A673 (cell line): ENCODE measurements at regions of chr1 and their contacts with region 1.

Region 1: GRCh38 chr1:236654957-236655356 is 31.3 kb upstream of the ACTN2 start:
- DNase-seq: peak; percentile 86
- H3K4me3 ChIP-seq: peak overlapping the region; percentile 10
- H3K27ac ChIP-seq: peak overlapping the region; percentile 95
- H3K4me1 ChIP-seq: peaks cover 31% of the 10 kb centered on the region
- H3K27me3 ChIP-seq: no peaks in the 10 kb centered on the region
- CTCF ChIP-seq: no peak

Region 2: DNA sequence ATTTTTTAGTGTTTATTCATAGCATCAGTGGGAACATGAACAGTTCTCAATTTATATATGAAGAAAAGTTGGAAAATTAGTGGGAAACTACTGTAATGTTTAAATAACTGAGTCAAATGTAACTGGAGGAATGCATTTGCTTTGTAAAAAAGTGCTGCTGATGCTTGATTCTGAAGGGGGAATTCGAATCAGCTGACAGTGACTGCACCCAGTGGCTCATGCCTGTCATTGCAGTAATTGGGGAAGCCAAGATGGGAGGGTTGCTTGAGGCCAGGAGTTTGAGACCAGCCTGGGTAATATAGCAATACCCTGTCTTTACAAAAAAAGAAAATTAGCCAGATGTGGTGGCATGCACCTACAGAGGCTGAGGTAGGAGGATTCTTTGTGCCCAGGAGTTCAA is 837.4 kb after region 1 on chr1:
- CTCF ChIA-PET with region 1: no interaction called
- POLR2A ChIA-PET with region 1: no interaction called
- intact Hi-C with region 1: loop called (anchors 5 kb)
- DNase-seq: peak; percentile 60
- H3K4me3 ChIP-seq: no peak overlapping the region
- H3K27ac ChIP-seq: peak overlapping the region; percentile 30
- H3K4me1 ChIP-seq: no peaks in the 10 kb centered on the region
- H3K27me3 ChIP-seq: no peaks in the 10 kb centered on the region
- CTCF ChIP-seq: peak; percentile 34